ENCODE measurements at regions of chr3 and their contacts with region 1.

Region 1: DNA sequence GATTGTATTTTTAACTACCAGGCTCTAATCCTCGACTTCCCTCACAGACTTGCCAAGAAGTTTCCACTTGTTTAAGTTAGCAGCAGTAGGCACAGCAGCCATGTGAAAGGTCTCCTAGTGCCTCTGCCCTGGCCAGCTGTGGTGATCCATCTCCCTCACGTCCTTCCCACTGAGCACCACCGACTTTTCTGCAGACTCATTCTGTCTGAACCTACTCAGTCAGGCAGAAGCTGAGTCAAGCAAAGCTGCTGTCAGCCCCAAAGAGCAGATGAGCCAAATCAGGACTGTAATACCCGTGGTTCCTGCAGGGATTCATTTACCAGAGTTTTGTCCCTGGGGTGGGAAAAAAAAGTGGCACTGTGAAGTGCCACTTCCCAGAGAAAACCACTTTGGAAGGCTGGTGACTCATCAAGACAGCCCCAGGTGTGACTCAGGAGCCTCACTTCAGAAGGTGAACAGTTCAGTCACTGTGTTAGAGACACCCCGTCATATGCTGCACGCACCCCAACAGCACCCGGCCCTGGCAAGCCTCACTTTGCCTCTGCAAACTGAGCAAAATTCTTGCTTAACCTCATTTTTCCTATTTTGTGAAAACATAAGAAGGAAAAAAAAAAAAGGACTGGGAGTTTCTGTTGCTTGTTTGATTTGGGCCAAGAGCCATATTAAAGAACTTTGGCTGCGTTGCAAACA is 76.0 kb downstream of the WWTR1 start:
- DNase-seq: peak in 1 of 2 donors; percentile 75
- ATAC-seq: peak; percentile 80
- H3K4me3 ChIP-seq: no peak overlapping the region
- H3K27ac ChIP-seq: peak overlapping the region in 1 of 2 donors; percentile 72
- H3K4me1 ChIP-seq: peaks cover 2 to 30% of the 10 kb centered on the region in 2 donors
- H3K27me3 ChIP-seq: no peaks in the 10 kb centered on the region

Region 2: GRCh38 chr3:149494022-149494758 is 87.6 kb before region 1 on chr3:
- intact Hi-C with region 1: no loop called
- DNase-seq: peak; percentile 74 to 83
- ATAC-seq: peak; percentile 77
- H3K4me3 ChIP-seq: no peak overlapping the region
- H3K27ac ChIP-seq: no peak overlapping the region
- H3K4me1 ChIP-seq: no peaks in the 10 kb centered on the region
- H3K27me3 ChIP-seq: no peaks in the 10 kb centered on the region

Region 3: GRCh38 chr3:149547938-149548668 is 33.7 kb before region 1 on chr3:
- intact Hi-C with region 1: loop called in 1 of 2 experiments (anchors 5 kb)
- DNase-seq: peak in 1 of 2 donors; percentile 69
- ATAC-seq: peak; percentile 76
- H3K4me3 ChIP-seq: no peak overlapping the region
- H3K27ac ChIP-seq: peak overlapping the region; percentile 89 to 98
- H3K4me1 ChIP-seq: peaks cover 2 to 5% of the 10 kb centered on the region in 2 donors
- H3K27me3 ChIP-seq: no peaks in the 10 kb centered on the region

Region 4: GRCh38 chr3:149621218-149622005 is 39.6 kb after region 1 on chr3:
- intact Hi-C with region 1: loop called in 1 of 2 experiments (anchors 5 kb)
- DNase-seq: peak in 1 of 2 donors; percentile 56
- ATAC-seq: peak; percentile 61
- H3K4me3 ChIP-seq: no peak overlapping the region
- H3K27ac ChIP-seq: no peak overlapping the region
- H3K4me1 ChIP-seq: peaks cover 14 to 29% of the 10 kb centered on the region in 2 donors
- H3K27me3 ChIP-seq: no peaks in the 10 kb centered on the region